Dorsolateral prefrontal cortex (tissue), 120 donors: ENCODE measurements at regions of chr19 and their contacts with region 1.

Region 1: GRCh38 chr19:58408152-58409009 is at the start of gene ZNF584:
- DNase-seq: peak; percentile 92 to 99 (median 97)
- H3K4me3 ChIP-seq: peak within 1 kb of the TSS; percentile 68 to 99 (median 93)
- H3K27ac ChIP-seq: peak within 1 kb of the TSS; percentile 49 to 94 (median 85)
- H3K27me3 ChIP-seq: no peaks in the 10 kb centered on the region
- CTCF ChIP-seq: peak in 32 of 56 donors; percentile 6 to 62 (median 24)
- total RNA-seq, gene ZNF584: 11.0 to 25.3 (median 18.1) TPM

Region 2: DNA sequence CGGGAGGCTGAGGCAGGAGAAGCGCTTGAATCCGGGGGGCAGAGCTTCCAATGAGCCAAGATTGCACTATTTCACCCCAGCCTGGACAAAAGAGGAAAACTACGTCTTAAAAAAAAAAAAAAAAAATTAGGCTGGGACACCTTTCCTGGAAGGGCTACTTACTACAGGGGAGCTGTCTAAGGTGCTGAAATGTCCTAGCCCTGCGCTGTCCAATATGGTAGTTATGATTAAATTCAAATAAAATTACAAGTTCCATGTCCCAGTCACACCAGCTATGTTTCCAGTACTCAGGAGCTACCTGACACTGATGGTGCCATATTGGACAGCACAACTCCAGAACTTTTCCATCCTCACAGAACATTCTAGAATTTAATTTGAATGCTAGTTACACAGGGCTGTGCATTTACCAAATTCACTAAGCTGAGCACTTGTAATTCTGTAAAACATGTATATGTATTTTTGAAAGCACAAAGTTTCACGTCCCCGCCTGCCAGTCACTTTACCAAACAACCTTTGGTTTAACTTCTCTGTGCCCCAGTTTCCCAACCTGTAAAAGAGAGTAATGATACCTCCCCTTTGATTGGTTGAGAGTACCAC is 90.8 kb before region 1 on chr19:
- intact Hi-C with region 1: no loop called
- DNase-seq: no peak
- H3K4me3 ChIP-seq: no peak overlapping the region
- H3K27ac ChIP-seq: peak overlapping the region in 1 of 59 donors; percentile 77
- H3K27me3 ChIP-seq: no peaks in the 10 kb centered on the region
- CTCF ChIP-seq: no peak

Region 3: DNA sequence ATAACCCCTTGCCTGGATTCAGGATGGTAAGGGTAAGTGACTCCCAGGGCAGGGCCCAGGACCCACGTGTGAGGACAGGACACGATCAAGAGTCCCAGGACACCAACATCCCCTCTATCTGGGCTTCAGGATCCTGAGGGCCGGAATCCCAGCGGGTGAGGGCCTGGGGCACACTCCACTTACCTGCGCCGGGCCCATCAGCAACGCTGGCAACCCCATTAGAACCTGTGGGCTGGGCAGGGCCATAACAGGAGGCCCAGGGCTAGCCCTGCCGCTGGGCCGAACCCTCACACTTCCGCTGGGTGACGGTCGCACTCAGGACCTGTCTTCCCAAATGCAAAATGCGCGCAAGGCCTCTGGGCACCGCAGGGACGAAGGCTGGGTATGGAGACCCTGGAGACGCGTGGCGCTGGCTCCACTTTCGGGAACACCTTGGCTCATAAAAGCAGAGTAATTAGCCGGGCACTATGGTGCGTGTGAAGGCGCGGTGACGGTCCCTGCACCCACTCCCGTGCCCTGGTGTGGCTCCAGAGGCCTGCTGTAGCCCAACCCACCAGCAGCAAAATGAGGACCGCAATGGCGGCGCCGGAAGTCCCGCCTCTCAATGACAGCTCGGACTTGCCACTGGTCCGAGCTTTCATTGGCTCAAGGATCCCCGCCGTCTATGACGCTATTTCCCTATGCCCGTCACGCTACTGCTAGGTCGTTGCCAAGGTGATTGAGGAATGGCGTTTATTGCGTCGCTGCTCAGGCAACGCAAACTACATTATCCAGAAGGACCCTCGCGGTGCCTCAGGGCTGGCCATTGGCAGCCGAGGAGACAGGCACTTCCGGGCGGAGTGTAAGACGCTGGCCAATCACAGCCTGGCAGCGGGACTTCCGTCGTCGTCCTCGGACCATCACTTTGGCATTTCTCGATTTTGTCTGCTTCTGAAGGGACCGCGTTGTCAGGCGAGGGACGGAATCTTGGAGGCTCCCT is 31.5 kb after region 1 on chr19 and contains the start of gene ZNF132:
- intact Hi-C with region 1: loop called (anchors 2 to 5 kb)
- DNase-seq: peak; percentile 98 to 100 (median 100)
- H3K4me3 ChIP-seq: peak within 1 kb of the TSS; percentile 64 to 100 (median 84)
- H3K27ac ChIP-seq: peak within 1 kb of the TSS in 57 of 59 donors; percentile 29 to 93 (median 82)
- H3K27me3 ChIP-seq: no peaks in the 10 kb centered on the region
- CTCF ChIP-seq: peak in 15 of 56 donors; percentile 7 to 43 (median 21)
- total RNA-seq, gene ZNF132: 7.3 to 19.7 (median 13.0) TPM

Region 4: DNA sequence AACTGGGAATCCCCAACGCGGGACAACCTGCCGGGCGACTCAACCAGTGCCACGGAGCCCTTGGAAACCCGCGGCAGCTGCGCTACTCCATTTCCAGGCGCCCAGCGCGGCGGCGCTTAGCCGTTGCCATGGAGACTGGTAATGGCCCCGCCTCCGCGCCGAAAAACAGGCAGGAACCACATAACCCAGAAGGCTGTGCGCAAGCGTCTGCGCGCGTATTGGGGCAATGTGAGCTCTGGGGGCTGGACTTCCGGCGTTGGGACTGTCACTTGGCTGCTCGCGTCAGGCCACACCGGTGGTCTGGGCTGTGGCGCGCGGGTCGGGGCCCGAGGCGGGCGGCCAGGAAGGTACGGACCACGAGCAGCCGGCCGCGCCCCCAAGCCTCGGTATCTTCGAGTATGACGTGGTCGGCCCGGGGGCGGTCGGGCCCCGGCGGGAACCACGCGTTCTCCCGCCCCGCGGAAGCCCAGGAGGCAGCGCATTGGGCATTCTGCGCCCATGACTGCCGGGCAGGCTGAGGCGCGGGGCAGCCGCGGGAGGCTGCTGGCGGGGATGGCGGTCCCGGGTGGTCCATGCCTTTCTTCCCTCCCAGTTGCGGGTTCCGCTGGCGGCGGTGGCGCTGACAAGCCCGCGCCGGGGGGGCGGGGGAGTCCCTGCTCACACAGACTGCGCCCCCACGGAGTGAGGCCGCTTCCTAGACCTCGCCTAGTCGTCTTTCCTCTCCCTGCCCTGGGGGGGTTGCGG is 43.1 kb after region 1 on chr19 and contains the start of gene ZNF324B:
- intact Hi-C with region 1: no loop called
- DNase-seq: peak; percentile 97 to 99 (median 98)
- H3K4me3 ChIP-seq: peak within 1 kb of the TSS; percentile 63 to 99 (median 92)
- H3K27ac ChIP-seq: peak within 1 kb of the TSS in 37 of 59 donors; percentile 13 to 84 (median 60)
- H3K27me3 ChIP-seq: no peaks in the 10 kb centered on the region
- CTCF ChIP-seq: peak in 16 of 56 donors; percentile 5 to 48 (median 18)
- total RNA-seq, gene ZNF324B: 9.1 to 22.5 (median 14.5) TPM

Region 5: DNA sequence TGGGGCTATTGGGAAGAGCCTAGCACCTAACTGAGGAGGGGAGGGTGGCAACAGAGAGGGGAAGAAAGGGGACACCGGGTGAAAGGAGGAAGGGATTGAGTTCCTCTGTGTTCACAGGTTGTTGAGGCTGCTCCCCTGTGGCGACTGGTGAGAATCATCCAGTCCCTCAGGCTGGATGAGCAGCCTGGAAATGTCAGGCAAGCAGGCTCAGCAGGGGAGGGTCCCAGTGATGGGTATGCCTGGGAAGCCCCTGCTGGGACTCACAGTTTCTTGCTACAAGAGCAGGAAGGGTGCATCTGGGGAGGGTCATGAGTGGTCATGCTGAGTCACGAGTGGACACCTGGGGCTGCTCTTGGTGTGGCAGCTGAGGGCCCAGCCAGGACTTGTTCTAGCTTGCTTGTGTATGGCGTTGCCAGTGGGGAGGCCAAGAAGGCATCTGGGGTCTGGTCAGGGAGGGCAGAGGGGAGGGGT is 60.0 kb after region 1 on chr19:
- intact Hi-C with region 1: loop called in 1 of 2 experiments (anchors 2 kb)
- DNase-seq: no peak
- H3K4me3 ChIP-seq: peak overlapping the region in 23 of 59 donors; percentile 4 to 99 (median 92)
- H3K27ac ChIP-seq: no peak overlapping the region
- H3K27me3 ChIP-seq: no peaks in the 10 kb centered on the region
- CTCF ChIP-seq: no peak